Activated T-helper 1 cell treated with anti-CD3 and anti-CD28 coated beads, Interleukin-12 subunit alpha, Interleukin-12 subunit beta, Interleukin-2, Interleukin-4 antibody, amounts not matched to agents 30 ng/mL and 10 ng/mL and 1 ng/mL, durations not matched to agents 14 hours and 24 hours and 36 hours (primary cell): ENCODE measurements at regions of chr5 and their contacts with region 1.

Region 1: GRCh38 chr5:172697123-172698121 is 56.4 kb downstream of the NEURL1B start:
- DNase-seq: peak; percentile 75
- H3K4me3 Mint-ChIP-seq: peak overlapping the region; percentile 82
- H3K27ac Mint-ChIP-seq: peak overlapping the region; percentile 45
- H3K4me1 Mint-ChIP-seq: peaks cover 22% of the 10 kb centered on the region
- H3K27me3 Mint-ChIP-seq: peaks cover 24% of the 10 kb centered on the region

Region 2: GRCh38 chr5:172293054-172293744 is 404.2 kb before region 1 on chr5:
- intact Hi-C with region 1: loop called (anchors 1 kb)
- DNase-seq: peak; percentile 51
- H3K4me3 Mint-ChIP-seq: no peak overlapping the region
- H3K27ac Mint-ChIP-seq: no peak overlapping the region
- H3K4me1 Mint-ChIP-seq: peaks cover 5% of the 10 kb centered on the region
- H3K27me3 Mint-ChIP-seq: peaks cover 27% of the 10 kb centered on the region

Region 3: GRCh38 chr5:172458976-172459782 is 238.2 kb before region 1 on chr5:
- intact Hi-C with region 1: loop called (anchors 1 kb)
- DNase-seq: no peak
- H3K4me3 Mint-ChIP-seq: no peak overlapping the region
- H3K27ac Mint-ChIP-seq: no peak overlapping the region
- H3K4me1 Mint-ChIP-seq: peaks cover 20% of the 10 kb centered on the region
- H3K27me3 Mint-ChIP-seq: peaks cover 22% of the 10 kb centered on the region

Region 4: DNA sequence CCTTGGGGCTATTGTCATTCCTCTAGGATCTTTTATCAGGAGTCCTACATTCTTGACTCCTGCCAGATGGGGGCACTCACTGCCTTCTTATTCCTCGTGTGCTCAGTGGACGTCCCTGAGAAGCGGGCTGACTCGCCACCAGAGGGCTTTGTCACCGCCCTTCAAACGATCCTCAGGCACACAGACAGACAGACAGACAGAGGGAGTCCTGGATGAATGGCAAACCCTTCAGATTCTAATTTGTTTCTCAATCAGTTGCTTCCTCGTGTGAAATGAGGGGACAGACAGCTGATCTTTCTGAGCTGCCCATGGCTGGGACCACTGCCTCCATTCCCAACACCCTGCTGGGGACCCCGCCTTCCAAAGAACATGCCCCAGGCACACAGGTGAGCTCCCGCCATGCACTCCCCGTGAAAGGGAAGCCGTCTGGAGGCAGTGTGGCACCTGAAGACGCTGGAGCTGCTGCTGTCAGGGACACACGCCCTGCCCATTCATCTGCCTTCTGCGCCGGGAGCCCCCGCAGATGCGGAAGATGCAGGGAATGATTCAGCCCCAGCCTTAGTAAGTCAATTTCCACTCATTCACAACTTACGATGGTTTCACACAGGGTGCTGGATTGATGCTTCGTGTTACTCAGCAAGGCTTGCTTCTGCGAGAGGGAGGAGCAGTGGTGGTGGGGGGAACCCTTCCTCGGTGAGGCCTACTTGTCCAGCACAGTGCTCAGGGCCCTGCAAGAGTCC is 218.2 kb before region 1 on chr5:
- intact Hi-C with region 1: loop called (anchors 1 kb)
- DNase-seq: peak; percentile 25
- H3K4me3 Mint-ChIP-seq: no peak overlapping the region
- H3K27ac Mint-ChIP-seq: no peak overlapping the region
- H3K4me1 Mint-ChIP-seq: no peaks in the 10 kb centered on the region
- H3K27me3 Mint-ChIP-seq: peaks cover 5% of the 10 kb centered on the region

Region 5: GRCh38 chr5:172640822-172641358 is 56.5 kb before region 1 on chr5 and contains the start of gene NEURL1B:
- intact Hi-C with region 1: loop called (anchors 5 kb)
- DNase-seq: peak; percentile 61
- H3K4me3 Mint-ChIP-seq: peak within 1 kb of the TSS; percentile 70
- H3K27ac Mint-ChIP-seq: no peak within 1 kb of the TSS
- H3K4me1 Mint-ChIP-seq: peaks cover 7% of the 10 kb centered on the region
- H3K27me3 Mint-ChIP-seq: peaks cover 52% of the 10 kb centered on the region
- total RNA-seq, gene NEURL1B: 0.05 and 0.12 TPM in 2 replicates